Caco-2 (cell line): ENCODE measurements at regions of chr1 and their contacts with region 1.

Region 1: GRCh38 chr1:66446261-66447001 is 87.5 kb upstream of the SGIP1 start:
- DNase-seq: peak in 1 of 2 experiments; percentile 39
- H3K4me3 ChIP-seq: no peak overlapping the region
- H3K4me3 Mint-ChIP-seq: no peak overlapping the region
- H3K27ac Mint-ChIP-seq: no peak overlapping the region
- H3K4me1 ChIP-seq: no peaks in the 10 kb centered on the region
- H3K4me1 Mint-ChIP-seq: peaks cover 8% of the 10 kb centered on the region
- H3K27me3 ChIP-seq: no peaks in the 10 kb centered on the region
- H3K27me3 Mint-ChIP-seq: peaks cover 8% of the 10 kb centered on the region
- CTCF ChIP-seq: peak; percentile 47 to 56

Region 2: GRCh38 chr1:65958561-65959350 is 487.7 kb before region 1 on chr1:
- CTCF ChIA-PET with region 1: no interaction called
- POLR2A ChIA-PET with region 1: no interaction called
- intact Hi-C with region 1: loop called (anchors 1 kb)
- DNase-seq: peak in 1 of 2 experiments; percentile 45
- H3K4me3 ChIP-seq: no peak overlapping the region
- H3K4me3 Mint-ChIP-seq: no peak overlapping the region
- H3K27ac Mint-ChIP-seq: no peak overlapping the region
- H3K4me1 ChIP-seq: no peaks in the 10 kb centered on the region
- H3K4me1 Mint-ChIP-seq: no peaks in the 10 kb centered on the region
- H3K27me3 ChIP-seq: no peaks in the 10 kb centered on the region
- H3K27me3 Mint-ChIP-seq: peaks cover 2% of the 10 kb centered on the region
- CTCF ChIP-seq: peak in 1 of 2 experiments; percentile 37

Region 3: DNA sequence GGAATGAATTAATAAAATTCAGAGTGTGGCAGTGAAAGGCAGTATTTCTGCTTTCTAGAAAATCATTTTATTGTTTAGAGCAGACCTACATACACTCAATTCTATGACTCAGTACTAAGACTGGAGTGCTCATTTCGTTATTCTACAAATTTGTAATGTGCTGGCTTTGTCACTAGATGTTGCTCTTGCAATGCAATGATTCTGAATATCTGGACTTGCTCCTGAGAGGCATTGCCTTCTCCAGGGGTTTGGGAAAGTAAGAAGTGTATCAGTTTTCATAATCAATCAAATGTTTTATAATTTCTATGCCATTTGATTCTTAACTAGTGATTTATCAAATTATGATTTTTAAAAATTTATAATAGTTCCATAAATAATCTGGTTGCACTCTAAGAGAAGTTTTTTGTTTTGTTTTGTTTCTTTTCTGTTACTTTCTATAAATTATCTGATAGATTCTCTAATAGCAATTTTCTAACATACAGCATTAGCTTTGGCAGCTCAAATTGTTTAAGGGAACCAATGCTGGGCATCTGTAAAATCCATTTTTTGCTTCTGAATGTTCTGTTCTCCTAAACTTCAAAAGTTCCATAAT is 193.0 kb before region 1 on chr1:
- CTCF ChIA-PET with region 1: interaction called, 3 read pairs
- POLR2A ChIA-PET with region 1: no interaction called
- intact Hi-C with region 1: loop called (anchors 1 kb)
- DNase-seq: peak in 1 of 2 experiments; percentile 18
- H3K4me3 ChIP-seq: no peak overlapping the region
- H3K4me3 Mint-ChIP-seq: no peak overlapping the region
- H3K27ac Mint-ChIP-seq: no peak overlapping the region
- H3K4me1 ChIP-seq: no peaks in the 10 kb centered on the region
- H3K4me1 Mint-ChIP-seq: no peaks in the 10 kb centered on the region
- H3K27me3 ChIP-seq: no peaks in the 10 kb centered on the region
- H3K27me3 Mint-ChIP-seq: peaks cover 14% of the 10 kb centered on the region
- CTCF ChIP-seq: peak; percentile 24 to 50

Region 4: DNA sequence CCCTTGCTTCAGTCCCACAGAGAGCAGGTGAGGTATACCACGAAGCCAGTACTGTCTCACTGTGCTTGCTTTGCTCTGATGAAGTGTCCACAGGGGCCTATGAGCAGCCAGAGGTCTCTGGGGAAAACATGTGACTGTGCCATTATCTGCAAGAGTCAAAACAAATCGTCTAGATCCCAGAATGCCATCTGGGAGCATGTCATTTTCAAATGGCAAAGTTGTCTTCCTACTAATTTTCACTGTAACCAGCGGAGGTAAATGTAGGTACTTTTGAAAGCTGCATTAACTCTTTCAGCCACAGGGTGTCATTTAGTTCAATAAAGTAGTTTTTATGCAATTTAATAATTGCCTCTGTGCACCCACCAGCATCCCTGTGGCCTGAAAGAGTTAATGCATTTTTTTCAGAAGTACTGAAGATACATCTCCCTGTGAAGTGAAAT is 86.1 kb before region 1 on chr1:
- CTCF ChIA-PET with region 1: no interaction called
- POLR2A ChIA-PET with region 1: no interaction called
- intact Hi-C with region 1: loop called (anchors 5 kb)
- DNase-seq: no peak
- H3K4me3 ChIP-seq: no peak overlapping the region
- H3K4me3 Mint-ChIP-seq: no peak overlapping the region
- H3K27ac Mint-ChIP-seq: no peak overlapping the region
- H3K4me1 ChIP-seq: no peaks in the 10 kb centered on the region
- H3K4me1 Mint-ChIP-seq: no peaks in the 10 kb centered on the region
- H3K27me3 ChIP-seq: no peaks in the 10 kb centered on the region
- H3K27me3 Mint-ChIP-seq: peaks cover 11% of the 10 kb centered on the region
- CTCF ChIP-seq: no peak